ENCODE measurements at regions of chr17 and their contacts with region 1.

Region 1: DNA sequence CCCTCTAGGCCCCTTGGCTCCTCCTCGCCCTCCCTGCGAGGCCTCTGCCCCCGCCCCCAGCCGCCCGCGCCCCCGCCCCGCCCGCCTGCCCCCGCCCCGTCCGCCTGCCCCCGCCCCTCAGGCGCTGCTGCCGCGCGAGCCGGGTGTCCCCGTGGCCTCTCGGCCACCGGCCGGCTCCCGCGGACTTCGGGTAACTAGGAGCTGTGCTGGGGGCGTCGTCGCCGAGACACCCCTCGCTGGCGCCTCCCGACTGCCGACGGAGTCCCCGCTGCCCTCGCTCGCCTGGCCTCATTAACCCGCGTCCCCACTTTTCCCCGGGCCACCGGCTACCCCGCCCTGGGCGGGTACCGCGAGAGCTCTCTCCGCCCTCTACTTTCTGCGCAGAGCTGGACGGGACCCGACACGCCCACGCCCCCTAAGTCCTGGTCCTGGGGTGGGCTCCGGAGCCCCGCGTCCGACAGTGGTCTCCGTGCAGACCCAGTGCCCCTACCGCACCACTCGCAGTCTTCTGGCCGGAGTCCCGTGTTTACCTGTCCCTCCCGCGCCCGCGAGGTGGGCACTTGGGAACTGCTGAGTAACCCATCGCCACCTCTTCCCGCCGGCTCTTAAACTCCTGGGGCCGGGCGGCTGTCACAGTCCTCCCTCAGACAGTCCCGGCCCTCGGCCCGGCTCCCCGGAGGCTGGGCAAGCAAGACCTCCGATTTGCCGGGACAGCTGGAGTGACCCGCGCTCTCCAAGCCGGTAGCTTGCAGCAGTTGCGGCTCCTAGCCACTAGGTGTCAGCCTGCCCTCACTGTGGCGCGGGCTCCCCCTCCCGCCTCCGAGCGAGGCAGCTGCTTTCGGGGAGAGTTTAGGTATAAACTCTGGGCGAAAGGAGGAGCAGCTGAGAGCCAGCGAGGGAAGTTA is at the start of gene TLCD1:
- DNase-seq: peak; percentile 96
- H3K4me3 Mint-ChIP-seq: peak within 1 kb of the TSS; percentile 91
- H3K27ac Mint-ChIP-seq: peak within 1 kb of the TSS; percentile 99
- H3K4me1 Mint-ChIP-seq: peaks cover 42% of the 10 kb centered on the region
- H3K27me3 Mint-ChIP-seq: no peaks in the 10 kb centered on the region
- total RNA-seq, gene TLCD1: 4.0 to 4.6 TPM

Region 2: DNA sequence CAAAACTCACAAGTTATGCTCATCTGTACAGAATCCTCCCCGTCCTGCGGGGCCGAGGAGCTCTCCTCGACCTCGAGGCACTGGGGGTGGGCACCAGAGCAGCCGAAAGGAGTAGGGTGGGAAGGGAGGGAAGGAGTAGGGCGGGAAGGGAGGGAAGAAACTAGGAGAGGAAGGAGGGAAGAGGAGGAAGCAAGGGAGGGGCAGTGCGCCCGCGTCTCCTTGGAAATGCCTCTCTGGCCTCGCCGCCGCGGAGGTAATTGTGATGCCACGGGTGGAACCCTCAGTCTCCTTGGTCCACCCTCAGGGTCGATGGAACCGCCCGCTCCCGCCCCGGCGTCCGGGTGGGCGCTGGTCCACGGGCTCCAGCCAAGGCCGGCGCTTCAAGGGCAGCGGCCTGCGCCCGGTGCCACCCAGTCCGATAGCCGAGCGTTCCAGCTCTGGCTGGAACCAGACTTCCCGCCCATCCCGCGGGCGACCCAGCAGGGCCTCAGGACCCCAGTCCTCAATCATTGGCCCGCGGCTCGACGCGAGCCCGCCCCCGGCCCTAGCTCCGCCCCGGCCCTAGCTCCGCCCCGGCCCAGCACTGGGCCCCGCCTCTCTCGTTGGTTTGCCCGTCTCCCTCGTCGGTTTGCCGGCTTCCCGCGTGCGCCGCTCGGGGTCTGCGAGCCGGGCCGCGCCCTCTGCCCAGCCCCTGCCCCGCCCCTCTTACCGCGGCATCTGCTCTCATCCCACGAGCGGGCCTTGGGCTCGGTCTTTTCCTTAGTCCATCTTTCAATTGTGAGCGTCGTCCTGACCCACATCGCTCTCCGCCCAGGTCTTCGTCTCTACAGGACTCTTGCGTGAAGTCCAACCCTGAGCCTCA is 15.4 kb before region 1 on chr17:
- CTCF ChIA-PET with region 1: interaction called, 12 read pairs
- intact Hi-C with region 1: loop called (anchors 1 kb)
- DNase-seq: peak; percentile 92
- H3K4me3 Mint-ChIP-seq: peak overlapping the region; percentile 79
- H3K27ac Mint-ChIP-seq: peak overlapping the region; percentile 79
- H3K4me1 Mint-ChIP-seq: peaks cover 17% of the 10 kb centered on the region
- H3K27me3 Mint-ChIP-seq: peaks cover 16% of the 10 kb centered on the region

Region 3: GRCh38 chr17:28755486-28755885 is 29.0 kb after region 1 on chr17:
- CTCF ChIA-PET with region 1: interaction called, 353 read pairs
- intact Hi-C with region 1: loop called (anchors 1 kb)
- DNase-seq: no peak
- H3K4me3 Mint-ChIP-seq: no peak overlapping the region
- H3K27ac Mint-ChIP-seq: no peak overlapping the region
- H3K4me1 Mint-ChIP-seq: peaks cover 2% of the 10 kb centered on the region
- H3K27me3 Mint-ChIP-seq: no peaks in the 10 kb centered on the region

Region 4: DNA sequence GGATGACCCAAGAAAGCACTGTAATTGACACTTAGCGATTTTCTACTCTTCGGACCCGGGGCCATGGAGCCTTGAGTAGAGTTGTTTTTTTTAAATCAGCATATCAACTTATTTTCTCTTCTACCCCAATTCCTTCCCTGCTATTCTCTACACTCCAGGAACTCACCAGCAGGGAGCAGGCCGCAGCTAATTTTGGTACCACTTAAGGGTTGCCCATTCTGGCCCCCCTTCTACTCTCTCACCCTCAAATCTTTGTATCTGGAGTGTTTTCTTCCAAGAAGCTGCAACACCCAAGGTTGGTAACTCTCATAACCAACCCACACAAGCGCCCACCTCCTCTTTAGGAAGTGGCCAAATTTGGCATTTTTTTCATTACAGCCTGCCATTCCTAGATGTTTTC is 122.8 kb after region 1 on chr17:
- CTCF ChIA-PET with region 1: interaction called, 14 read pairs
- intact Hi-C with region 1: loop called (anchors 1 kb)
- DNase-seq: peak; percentile 60
- H3K4me3 Mint-ChIP-seq: no peak overlapping the region
- H3K27ac Mint-ChIP-seq: no peak overlapping the region
- H3K4me1 Mint-ChIP-seq: no peaks in the 10 kb centered on the region
- H3K27me3 Mint-ChIP-seq: no peaks in the 10 kb centered on the region

Region 5: DNA sequence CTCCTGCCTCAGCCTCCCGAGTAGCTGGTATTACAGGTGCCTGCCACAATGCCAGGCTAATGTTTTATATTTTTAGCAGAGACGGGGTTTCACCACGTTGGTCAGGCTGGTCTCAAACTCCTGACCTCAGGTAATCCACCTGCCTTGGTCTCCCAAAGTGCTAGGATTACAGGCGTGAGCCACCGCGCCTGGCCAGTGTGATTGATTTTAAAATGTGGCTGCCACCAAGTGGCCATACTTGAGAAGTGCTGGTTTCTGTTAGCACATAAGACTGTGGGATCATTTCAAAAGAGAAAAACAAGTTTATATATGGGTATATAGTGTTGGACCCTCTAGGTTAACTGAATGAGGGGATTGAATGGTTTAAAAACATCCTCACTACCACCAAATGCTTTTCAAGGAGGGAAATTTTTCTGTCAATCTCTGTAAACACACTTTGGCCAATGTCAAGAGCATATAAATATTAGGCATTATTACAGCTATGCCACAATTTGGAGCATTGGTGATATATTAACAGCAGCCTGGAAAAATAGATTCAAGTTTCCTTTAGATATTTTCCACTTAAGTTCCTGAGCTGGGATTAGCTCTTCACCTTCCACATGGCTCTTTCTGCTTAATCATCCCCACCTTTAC is 189.9 kb after region 1 on chr17:
- CTCF ChIA-PET with region 1: interaction called, 10 read pairs
- intact Hi-C with region 1: loop called (anchors 1 kb)
- DNase-seq: peak; percentile 62
- H3K4me3 Mint-ChIP-seq: no peak overlapping the region
- H3K27ac Mint-ChIP-seq: peak overlapping the region; percentile 34
- H3K4me1 Mint-ChIP-seq: peaks cover 13% of the 10 kb centered on the region
- H3K27me3 Mint-ChIP-seq: no peaks in the 10 kb centered on the region

Region 6: DNA sequence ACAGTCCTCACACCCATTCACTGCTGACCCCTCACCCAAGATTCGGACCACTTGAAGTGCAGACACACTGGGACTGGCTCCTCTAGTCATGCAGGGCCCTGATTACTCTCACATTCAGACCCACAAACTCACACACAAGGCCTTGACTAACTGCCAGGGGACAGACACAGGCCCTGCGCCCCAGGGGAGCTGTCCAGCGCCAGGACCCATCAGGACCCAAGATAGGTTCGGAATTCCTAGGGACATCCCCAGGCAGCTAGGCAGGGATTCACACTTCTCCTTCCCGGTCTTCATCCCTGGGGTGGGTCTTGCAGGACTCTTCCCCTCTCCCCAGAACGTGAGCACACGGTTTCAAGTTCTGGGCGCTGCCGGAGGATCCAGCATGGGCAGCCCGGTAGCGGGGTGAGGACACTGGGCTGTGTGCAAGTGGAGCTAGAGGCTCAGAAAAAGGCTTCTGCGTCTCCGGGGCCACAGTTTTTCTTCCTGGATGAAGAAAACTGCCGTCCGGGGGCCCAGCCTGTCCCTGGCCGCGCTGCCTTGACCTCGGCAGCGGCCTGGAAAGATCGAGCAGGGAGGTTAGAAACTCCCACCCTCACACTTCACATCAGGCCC is 277.7 kb after region 1 on chr17:
- CTCF ChIA-PET with region 1: no interaction called
- intact Hi-C with region 1: no loop called
- DNase-seq: no peak
- H3K4me3 Mint-ChIP-seq: no peak overlapping the region
- H3K27ac Mint-ChIP-seq: no peak overlapping the region
- H3K4me1 Mint-ChIP-seq: no peaks in the 10 kb centered on the region
- H3K27me3 Mint-ChIP-seq: peaks cover 48% of the 10 kb centered on the region

Region 7: DNA sequence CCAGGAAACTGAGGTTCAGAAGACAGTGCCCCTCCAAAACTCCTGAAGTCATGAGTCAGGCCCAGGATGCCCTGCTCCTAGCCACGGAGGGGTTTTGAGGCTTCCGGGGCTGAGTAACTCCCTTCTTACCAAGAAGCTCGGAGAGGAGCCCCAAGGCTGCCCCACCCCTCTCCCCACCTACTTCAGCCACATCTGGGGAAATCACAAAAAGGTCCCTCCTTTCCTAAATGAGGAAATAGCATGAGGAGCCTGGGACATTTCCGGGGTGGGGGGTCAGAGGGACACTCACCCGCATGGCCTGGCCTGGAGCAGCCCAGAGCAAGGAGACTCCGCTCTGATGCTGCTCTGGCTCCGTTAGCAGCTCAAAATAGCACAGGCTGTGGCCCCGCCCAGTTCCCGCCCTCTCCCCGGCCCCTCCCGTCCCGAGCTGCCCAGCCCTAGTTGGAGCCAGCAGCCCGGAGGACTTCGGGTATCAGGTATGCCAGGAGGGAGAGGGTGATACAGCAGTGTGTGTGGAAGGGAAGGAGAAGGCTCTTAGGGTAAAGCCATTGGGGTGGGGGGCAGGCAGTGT is 413.7 kb after region 1 on chr17:
- CTCF ChIA-PET with region 1: no interaction called
- intact Hi-C with region 1: loop called (anchors 1 kb)
- DNase-seq: peak; percentile 89
- H3K4me3 Mint-ChIP-seq: peak overlapping the region; percentile 83
- H3K27ac Mint-ChIP-seq: peak overlapping the region; percentile 93
- H3K4me1 Mint-ChIP-seq: peaks cover 66% of the 10 kb centered on the region
- H3K27me3 Mint-ChIP-seq: no peaks in the 10 kb centered on the region

Measured in activated naive CD4-positive, alpha-beta T cell treated with anti-CD3 and anti-CD28 coated beads for 36 hours (primary cell).